B cell (primary cell): ENCODE measurements at regions of chr10 and their contacts with region 1.

Region 1: DNA sequence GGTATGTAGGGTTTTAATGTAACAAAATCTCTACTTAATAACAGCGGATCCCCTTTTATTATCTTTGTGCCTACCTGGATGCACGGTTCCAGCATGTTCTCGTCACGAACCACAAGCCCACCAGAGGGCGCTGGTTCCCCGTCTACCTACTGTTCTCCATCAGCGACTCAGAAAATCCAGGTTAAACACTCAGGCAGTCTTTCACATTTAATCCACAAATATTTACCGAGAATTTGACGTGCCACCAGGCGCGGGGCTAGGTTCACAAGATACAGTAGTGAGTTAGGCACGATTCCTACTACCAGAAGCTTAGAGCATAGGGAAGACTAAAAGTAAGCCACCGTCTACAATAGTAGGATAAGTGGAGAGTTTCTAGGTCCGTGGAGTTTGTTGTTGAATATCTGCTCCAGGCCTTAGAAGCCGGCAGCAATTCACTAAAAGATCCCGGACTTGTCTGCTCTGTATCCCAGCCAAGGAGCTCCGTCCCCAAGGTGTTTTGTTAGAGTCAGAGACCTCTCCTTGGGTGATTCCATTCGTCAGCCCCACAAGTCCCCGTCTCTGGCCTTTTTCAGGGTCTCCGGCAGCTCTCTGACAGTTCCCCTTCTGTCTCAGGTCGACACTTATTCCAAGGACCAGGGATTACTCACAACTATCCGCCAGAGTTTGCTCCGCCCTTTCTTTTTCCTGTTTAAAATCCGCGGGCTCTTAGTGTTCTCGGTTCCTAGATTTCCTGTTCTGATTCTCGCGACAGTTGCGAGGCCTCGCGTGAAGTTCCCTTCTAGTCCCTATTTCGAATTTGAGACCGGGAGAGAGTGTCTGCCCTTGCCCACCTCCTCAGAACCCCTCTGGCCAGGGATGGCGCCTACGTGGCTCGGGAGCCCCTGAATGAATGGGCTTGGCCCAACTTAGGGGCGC is 1.5 kb upstream of the KAZALD1 start:
- DNase-seq: peak; percentile 97
- ATAC-seq: peak; percentile 56
- H3K4me3 ChIP-seq: peak overlapping the region; percentile 93 to 100 (median 97)
- H3K4me3 Mint-ChIP-seq: peak overlapping the region; percentile 97
- H3K27ac ChIP-seq: peak overlapping the region; percentile 79 to 85
- H3K27ac Mint-ChIP-seq: peak overlapping the region; percentile 94
- H3K4me1 ChIP-seq: peaks cover 32 to 40% of the 10 kb centered on the region in 2 donors
- H3K4me1 Mint-ChIP-seq: peaks cover 36% of the 10 kb centered on the region
- H3K27me3 ChIP-seq: peaks cover 0 to 29% (median 10%) of the 10 kb centered on the region in 4 experiments
- H3K27me3 Mint-ChIP-seq: peaks cover 15% of the 10 kb centered on the region
- CTCF ChIP-seq: peak; percentile 97

Region 2: DNA sequence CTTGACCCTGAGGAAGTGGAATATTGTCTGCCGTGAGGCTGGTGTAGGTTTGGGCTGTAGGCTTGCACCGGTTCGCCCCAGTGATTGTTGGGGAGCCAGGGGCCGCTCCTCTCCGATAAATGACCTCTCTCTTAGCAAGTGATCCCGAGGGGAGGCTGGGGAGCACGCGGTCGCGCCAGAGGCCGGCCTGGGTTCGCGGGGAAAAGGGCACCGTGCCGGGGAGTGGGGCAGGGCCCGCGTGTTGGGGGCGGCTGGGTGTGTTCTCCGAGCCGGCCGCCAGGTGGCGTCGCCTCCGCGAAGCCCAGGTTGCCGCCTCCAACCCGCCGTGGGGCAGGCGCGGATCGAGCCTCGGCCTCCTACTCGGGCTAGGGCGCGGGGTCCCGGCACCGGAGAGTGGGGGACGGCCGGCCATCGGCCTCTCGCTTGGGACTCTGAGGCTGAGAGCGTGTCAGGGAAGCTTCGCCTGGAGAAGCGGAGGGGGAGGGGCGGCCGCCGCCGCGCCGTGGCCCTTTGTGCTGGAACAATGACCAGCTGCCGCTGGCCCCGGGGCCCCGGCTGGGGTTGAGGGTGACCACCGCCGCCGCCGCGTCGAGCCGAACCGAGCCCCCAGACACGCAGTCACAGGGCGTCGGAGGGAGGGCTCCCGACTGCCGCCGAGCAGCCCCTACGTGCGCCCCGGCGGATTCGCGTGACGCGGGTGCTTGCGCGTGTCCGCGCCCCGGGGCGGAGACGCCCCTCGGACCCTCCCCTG is 61.1 kb before region 1 on chr10:
- CTCF ChIA-PET with region 1: interaction called, 8 read pairs
- POLR2A ChIA-PET with region 1: interaction called, 3 read pairs
- intact Hi-C with region 1: loop called (anchors 1 kb)
- DNase-seq: peak; percentile 88
- ATAC-seq: peak; percentile 59
- H3K4me3 ChIP-seq: peak overlapping the region; percentile 37 to 89 (median 86)
- H3K4me3 Mint-ChIP-seq: peak overlapping the region; percentile 95
- H3K27ac ChIP-seq: peak overlapping the region; percentile 84 to 87
- H3K27ac Mint-ChIP-seq: peak overlapping the region; percentile 96
- H3K4me1 ChIP-seq: peaks cover 22 to 34% of the 10 kb centered on the region in 2 donors
- H3K4me1 Mint-ChIP-seq: peaks cover 29% of the 10 kb centered on the region
- H3K27me3 ChIP-seq: peaks cover 0 to 2% (median 0%) of the 10 kb centered on the region in 4 experiments
- H3K27me3 Mint-ChIP-seq: no peaks in the 10 kb centered on the region
- CTCF ChIP-seq: peak; percentile 88

Region 3: DNA sequence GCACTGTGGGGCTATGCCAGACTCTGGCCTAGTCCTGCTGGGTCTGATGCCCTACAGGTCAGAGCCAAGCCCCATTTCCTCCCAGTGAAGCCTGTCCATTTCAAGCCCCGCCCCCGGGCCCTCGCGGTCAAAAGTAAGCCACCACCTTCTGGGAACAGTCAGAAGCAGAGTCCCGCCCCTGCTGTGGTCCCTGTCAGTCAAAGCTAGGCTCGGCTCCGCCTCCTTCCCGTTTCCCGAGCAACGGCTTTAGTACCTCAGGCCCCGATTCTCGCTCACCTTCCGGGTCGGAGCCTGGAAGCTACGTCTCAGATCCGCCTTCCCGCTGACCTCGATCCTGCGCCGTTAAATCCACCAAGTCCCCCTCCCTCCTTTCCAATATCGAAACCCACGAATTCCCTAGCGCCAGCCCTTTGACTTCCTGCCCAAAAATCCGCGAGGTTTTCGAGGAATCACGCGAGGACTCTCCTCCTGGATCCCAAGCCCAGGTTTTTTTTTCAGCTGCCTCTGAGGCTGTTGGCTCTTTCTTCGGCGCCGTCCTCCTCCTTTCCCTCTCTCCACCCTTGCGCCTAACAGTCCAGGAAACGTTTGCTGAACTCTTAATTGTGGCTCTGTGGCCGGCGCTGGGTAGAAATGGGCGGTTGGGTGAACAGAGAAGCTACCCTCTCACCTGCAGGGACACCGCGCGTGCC is 17.5 kb before region 1 on chr10:
- CTCF ChIA-PET with region 1: interaction called, 306 read pairs
- POLR2A ChIA-PET with region 1: interaction called, 20 read pairs
- intact Hi-C with region 1: loop called (anchors 1 kb)
- DNase-seq: peak; percentile 88
- ATAC-seq: peak; percentile 90
- H3K4me3 ChIP-seq: peak overlapping the region; percentile 50 to 76 (median 68)
- H3K4me3 Mint-ChIP-seq: peak overlapping the region; percentile 100
- H3K27ac ChIP-seq: peak overlapping the region in 1 of 2 donors; percentile 76
- H3K27ac Mint-ChIP-seq: peak overlapping the region; percentile 90
- H3K4me1 ChIP-seq: peaks cover 6 to 15% of the 10 kb centered on the region in 2 donors
- H3K4me1 Mint-ChIP-seq: peaks cover 17% of the 10 kb centered on the region
- H3K27me3 ChIP-seq: peaks cover 0 to 22% (median 6%) of the 10 kb centered on the region in 4 experiments
- H3K27me3 Mint-ChIP-seq: peaks cover 19% of the 10 kb centered on the region
- CTCF ChIP-seq: no peak

Region 4: GRCh38 chr10:101120884-101121653 is 60.8 kb after region 1 on chr10:
- CTCF ChIA-PET with region 1: interaction called, 3 read pairs
- POLR2A ChIA-PET with region 1: no interaction called
- intact Hi-C with region 1: loop called (anchors 10 kb)
- DNase-seq: peak; percentile 68
- ATAC-seq: peak; percentile 83
- H3K4me3 ChIP-seq: peak overlapping the region; percentile 51 to 91 (median 68)
- H3K4me3 Mint-ChIP-seq: peak overlapping the region; percentile 94
- H3K27ac ChIP-seq: no peak overlapping the region
- H3K27ac Mint-ChIP-seq: peak overlapping the region; percentile 82
- H3K4me1 ChIP-seq: peaks cover 32% of the 10 kb centered on the region in 2 donors
- H3K4me1 Mint-ChIP-seq: peaks cover 33% of the 10 kb centered on the region
- H3K27me3 ChIP-seq: peaks cover 0 to 67% (median 43%) of the 10 kb centered on the region in 4 experiments
- H3K27me3 Mint-ChIP-seq: peaks cover 52% of the 10 kb centered on the region
- CTCF ChIP-seq: no peak

Region 5: DNA sequence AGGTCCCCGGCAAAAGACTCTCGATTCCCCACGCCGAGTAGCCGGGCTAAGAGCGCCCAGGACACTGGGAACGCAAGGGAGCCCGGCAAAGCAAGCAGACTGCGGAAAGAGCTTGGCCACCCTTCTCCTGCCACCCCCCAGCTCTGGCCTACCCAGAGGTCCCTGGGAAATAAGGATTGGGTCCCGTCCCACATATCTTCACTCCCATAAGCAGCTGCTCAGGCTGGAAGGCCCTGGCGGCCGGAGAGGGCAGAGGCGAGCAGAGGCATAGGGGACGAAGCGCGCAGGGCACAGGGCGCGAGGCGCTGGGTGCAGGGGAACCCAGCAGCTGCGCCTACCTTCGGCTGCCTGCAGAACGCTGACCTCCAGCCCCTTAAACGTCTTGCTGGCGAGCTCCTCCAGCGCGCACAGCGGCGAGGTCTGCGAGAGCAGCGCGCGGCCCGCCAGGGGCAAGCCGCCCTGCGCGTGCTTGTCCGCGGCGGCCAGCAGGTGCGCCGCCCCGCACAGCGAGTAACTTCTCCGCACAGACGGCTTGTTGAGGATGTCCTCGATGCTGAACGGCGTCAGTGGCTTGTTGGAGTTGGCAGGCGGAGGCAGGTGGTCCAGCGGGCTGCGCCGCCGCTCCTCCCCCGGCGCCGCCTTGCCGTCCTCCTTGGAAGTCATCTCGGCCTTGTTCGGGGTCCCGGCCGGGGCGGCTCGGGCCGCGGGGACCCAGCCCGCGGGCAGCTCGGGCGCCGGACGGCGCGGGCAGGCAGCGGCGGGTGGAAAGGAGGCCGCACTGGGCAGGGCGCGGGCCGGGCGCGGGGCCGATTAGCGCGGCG is 168.1 kb after region 1 on chr10:
- CTCF ChIA-PET with region 1: no interaction called
- POLR2A ChIA-PET with region 1: no interaction called
- intact Hi-C with region 1: loop called (anchors 5 kb)
- DNase-seq: no peak
- ATAC-seq: no peak
- H3K4me3 ChIP-seq: no peak overlapping the region
- H3K4me3 Mint-ChIP-seq: peak overlapping the region; percentile 73
- H3K27ac ChIP-seq: no peak overlapping the region
- H3K27ac Mint-ChIP-seq: peak overlapping the region; percentile 46
- H3K4me1 ChIP-seq: peaks cover 53 to 79% of the 10 kb centered on the region in 2 donors
- H3K4me1 Mint-ChIP-seq: peaks cover 41% of the 10 kb centered on the region
- H3K27me3 ChIP-seq: peaks cover 0 to 90% (median 77%) of the 10 kb centered on the region in 4 experiments
- H3K27me3 Mint-ChIP-seq: peaks cover 65% of the 10 kb centered on the region
- CTCF ChIP-seq: no peak

Region 6: DNA sequence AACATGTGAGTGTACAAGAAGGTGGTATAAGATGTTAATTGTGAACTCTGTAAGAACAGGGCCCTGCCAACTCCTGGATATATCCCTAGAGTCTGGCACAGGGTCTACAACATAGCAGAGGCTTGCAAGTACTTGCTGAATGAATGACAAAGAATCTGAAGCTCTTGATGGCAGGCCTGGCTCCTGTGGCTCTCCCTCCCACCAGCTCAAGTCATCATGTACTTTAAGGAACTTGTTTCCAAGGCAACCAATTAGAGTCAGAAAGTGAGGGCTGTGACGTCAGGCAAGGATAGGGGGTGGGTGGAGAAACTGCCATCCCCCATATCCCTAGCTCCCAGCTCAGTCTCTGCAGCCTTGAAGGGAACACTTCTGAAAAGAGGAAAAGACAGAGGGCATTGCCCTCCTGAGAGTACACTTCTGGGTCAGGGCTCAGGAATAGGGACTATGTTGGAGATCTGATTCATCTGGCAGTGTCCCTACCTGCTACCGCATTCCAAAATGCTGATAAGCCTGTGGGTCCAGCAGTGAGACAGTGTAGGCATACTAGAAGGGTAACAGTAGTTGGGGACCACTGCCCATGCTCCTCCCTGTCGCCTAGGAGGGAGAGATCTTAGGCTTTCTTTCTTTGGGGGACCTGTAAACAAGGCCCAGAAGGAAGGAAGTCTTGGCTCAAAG is 259.1 kb after region 1 on chr10:
- CTCF ChIA-PET with region 1: no interaction called
- POLR2A ChIA-PET with region 1: no interaction called
- intact Hi-C with region 1: no loop called
- DNase-seq: no peak
- ATAC-seq: no peak
- H3K4me3 ChIP-seq: no peak overlapping the region
- H3K4me3 Mint-ChIP-seq: no peak overlapping the region
- H3K27ac ChIP-seq: no peak overlapping the region
- H3K27ac Mint-ChIP-seq: no peak overlapping the region
- H3K4me1 ChIP-seq: no peaks in the 10 kb centered on the region
- H3K4me1 Mint-ChIP-seq: no peaks in the 10 kb centered on the region
- H3K27me3 ChIP-seq: peaks cover 0 to 3% (median 0%) of the 10 kb centered on the region in 4 experiments
- H3K27me3 Mint-ChIP-seq: peaks cover 23% of the 10 kb centered on the region
- CTCF ChIP-seq: no peak

Region 7: GRCh38 chr10:102055647-102056419 is 995.5 kb after region 1 on chr10 and contains the start of gene ARMH3:
- CTCF ChIA-PET with region 1: no interaction called
- POLR2A ChIA-PET with region 1: no interaction called
- intact Hi-C with region 1: loop called (anchors 5 kb)
- DNase-seq: peak; percentile 94
- ATAC-seq: peak; percentile 91
- H3K4me3 ChIP-seq: peak within 1 kb of the TSS; percentile 76 to 99 (median 93)
- H3K4me3 Mint-ChIP-seq: peak within 1 kb of the TSS; percentile 99
- H3K27ac ChIP-seq: peak within 1 kb of the TSS; percentile 75 to 80
- H3K27ac Mint-ChIP-seq: peak within 1 kb of the TSS; percentile 98
- H3K4me1 ChIP-seq: peaks cover 15 to 26% of the 10 kb centered on the region in 2 donors
- H3K4me1 Mint-ChIP-seq: peaks cover 36% of the 10 kb centered on the region
- H3K27me3 ChIP-seq: no peaks in the 10 kb centered on the region
- H3K27me3 Mint-ChIP-seq: no peaks in the 10 kb centered on the region
- CTCF ChIP-seq: no peak
- total RNA-seq, gene ARMH3: 36.2 and 40.7 TPM in 2 replicates